Natural killer cell (primary cell): ENCODE measurements at regions of chr9 and their contacts with region 1.

Region 1: DNA sequence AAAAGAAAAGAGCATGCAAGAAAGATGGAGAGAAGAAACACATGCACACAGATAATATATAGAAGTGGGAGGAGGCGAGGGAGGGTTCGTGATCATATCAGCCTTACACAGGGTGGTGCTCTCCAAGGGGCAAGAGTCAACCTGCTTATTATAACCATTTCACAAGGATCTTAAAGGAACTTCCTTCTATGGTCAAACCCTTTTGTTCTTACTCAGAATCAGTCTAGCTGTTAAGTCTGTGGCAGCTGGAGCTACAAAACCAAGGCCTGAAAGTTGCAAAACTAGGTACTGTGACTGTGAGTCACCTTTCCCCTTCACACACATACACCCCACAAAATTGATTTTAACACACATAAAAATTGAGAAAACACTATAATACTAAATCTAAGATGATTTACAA is 18.5 kb upstream of the ERMP1 start:
- DNase-seq: peak in 1 of 2 donors; percentile 52
- ATAC-seq: peak; percentile 90 to 92 (median 91)
- H3K4me3 ChIP-seq: no peak overlapping the region
- H3K4me3 Mint-ChIP-seq: peak overlapping the region; percentile 71
- H3K27ac ChIP-seq: peak overlapping the region; percentile 29
- H3K27ac Mint-ChIP-seq: peak overlapping the region; percentile 85 to 93
- H3K4me1 ChIP-seq: peaks cover 56% of the 10 kb centered on the region
- H3K4me1 Mint-ChIP-seq: peaks cover 68 to 77% of the 10 kb centered on the region in 2 donors
- H3K27me3 ChIP-seq: no peaks in the 10 kb centered on the region
- H3K27me3 Mint-ChIP-seq: no peaks in the 10 kb centered on the region
- CTCF ChIP-seq: no peak

Region 2: GRCh38 chr9:5832543-5833529 is 18.6 kb before region 1 on chr9 and contains the start of gene ERMP1:
- intact Hi-C with region 1: loop called (anchors 2 kb)
- DNase-seq: peak; percentile 88 to 93
- ATAC-seq: peak; percentile 92 to 97 (median 93)
- H3K4me3 ChIP-seq: peak within 1 kb of the TSS; percentile 63
- H3K4me3 Mint-ChIP-seq: peak within 1 kb of the TSS; percentile 95
- H3K27ac ChIP-seq: peak within 1 kb of the TSS; percentile 1
- H3K27ac Mint-ChIP-seq: peak within 1 kb of the TSS; percentile 91 to 95
- H3K4me1 ChIP-seq: peaks cover 13% of the 10 kb centered on the region
- H3K4me1 Mint-ChIP-seq: peaks cover 47 to 48% of the 10 kb centered on the region in 2 donors
- H3K27me3 ChIP-seq: no peaks in the 10 kb centered on the region
- H3K27me3 Mint-ChIP-seq: peaks cover 0 to 2% of the 10 kb centered on the region in 2 donors
- CTCF ChIP-seq: peak; percentile 90
- total RNA-seq, gene ERMP1: 24.7 to 52.0 (median 29.3) TPM